ENCODE measurements at regions of chr17 and their contacts with region 1.

Region 1: DNA sequence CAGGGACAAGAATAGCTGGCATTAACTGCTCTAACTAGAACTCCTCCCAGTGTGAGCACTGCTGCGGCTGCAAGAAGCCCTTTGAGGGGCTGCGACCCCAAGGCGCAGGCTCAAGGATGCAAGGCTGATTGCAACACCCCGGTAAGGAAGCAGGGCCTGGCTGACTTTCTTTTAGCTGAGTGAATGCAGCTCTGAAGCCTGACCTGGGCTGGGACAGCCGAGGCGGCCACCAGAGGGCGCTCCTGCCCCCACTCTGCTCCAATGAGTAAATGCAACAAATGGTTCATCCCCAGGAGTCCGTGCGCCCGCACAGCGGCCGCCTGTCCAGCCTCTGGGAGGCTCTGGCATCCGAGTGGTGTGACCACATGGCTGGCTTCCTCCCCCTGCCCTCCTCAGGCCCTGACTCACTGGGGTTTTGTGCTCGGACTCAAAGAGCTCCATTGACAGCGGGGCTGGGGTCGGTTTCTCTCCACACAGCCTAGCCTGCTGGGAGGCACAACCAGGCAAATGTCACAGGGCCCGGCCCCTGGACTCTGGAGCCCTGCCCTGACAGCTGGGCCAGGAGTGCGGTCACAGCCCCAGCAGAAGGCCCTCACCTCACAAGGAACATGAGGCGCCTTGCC is at the start of gene SMIM5:
- DNase-seq: peak; percentile 75 to 97
- H3K4me3 ChIP-seq: peak within 1 kb of the TSS in 1 of 4 experiments; percentile 16; a peak in 3 of 8 replicates
- H3K27ac ChIP-seq: no peak within 1 kb of the TSS
- H3K4me1 ChIP-seq: peaks cover 0 to 16% (median 11%) of the 10 kb centered on the region in 4 experiments; a peak in 5 of 7 replicates
- H3K27me3 ChIP-seq: no peaks in the 10 kb centered on the region
- CTCF ChIP-seq: peak; percentile 93 to 95 (median 94)
- EP300 ChIP-seq: no peak
- POLR2A ChIP-seq: no peak
- RAD21 ChIP-seq: peak; percentile 58 to 70
- total RNA-seq, gene SMIM5: not detected in 2 replicates

Region 2: GRCh38 chr17:75476271-75476671 is 156.7 kb before region 1 on chr17:
- CTCF ChIA-PET with region 1: no interaction called
- POLR2A ChIA-PET with region 1: no interaction called
- DNase-seq: no peak
- H3K4me3 ChIP-seq: no peak overlapping the region
- H3K27ac ChIP-seq: no peak overlapping the region
- H3K4me1 ChIP-seq: peaks cover 0 to 7% (median under 1%) of the 10 kb centered on the region in 4 experiments; a peak in 4 of 7 replicates
- H3K27me3 ChIP-seq: no peaks in the 10 kb centered on the region
- CTCF ChIP-seq: no peak
- EP300 ChIP-seq: no peak
- POLR2A ChIP-seq: no peak
- RAD21 ChIP-seq: no peak

Region 3: GRCh38 chr17:75559958-75560533 is 72.9 kb before region 1 on chr17:
- CTCF ChIA-PET with region 1: no interaction called
- POLR2A ChIA-PET with region 1: no interaction called
- DNase-seq: no peak
- H3K4me3 ChIP-seq: no peak overlapping the region
- H3K27ac ChIP-seq: no peak overlapping the region
- H3K4me1 ChIP-seq: peaks cover 0 to 17% (median 5%) of the 10 kb centered on the region in 4 experiments; a peak in 4 of 7 replicates
- H3K27me3 ChIP-seq: no peaks in the 10 kb centered on the region
- CTCF ChIP-seq: no peak
- EP300 ChIP-seq: no peak
- POLR2A ChIP-seq: no peak
- RAD21 ChIP-seq: no peak

Region 4: DNA sequence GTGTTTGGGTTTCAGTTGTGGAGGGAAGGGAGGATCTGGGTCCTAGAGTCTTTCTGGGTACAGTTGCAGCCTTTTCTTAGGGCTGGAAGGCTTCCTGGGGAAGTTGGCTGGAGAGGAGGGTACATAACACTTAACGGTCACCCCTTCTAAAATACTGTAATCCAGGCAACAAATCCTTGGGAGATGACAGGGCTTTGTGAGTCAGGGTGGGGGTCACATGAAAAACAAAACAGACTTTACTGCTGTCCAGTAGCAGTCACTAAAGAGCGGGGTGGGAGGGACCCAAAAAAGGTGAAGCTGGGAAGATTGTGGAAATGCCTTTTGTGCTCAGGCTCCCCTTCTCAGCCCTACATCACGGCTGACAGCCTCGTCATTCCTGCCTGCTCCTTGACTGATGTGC is 40.5 kb after region 1 on chr17:
- CTCF ChIA-PET with region 1: interaction called, 2,200 read pairs
- POLR2A ChIA-PET with region 1: interaction called, 3 read pairs
- DNase-seq: no peak
- H3K4me3 ChIP-seq: no peak overlapping the region
- H3K27ac ChIP-seq: no peak overlapping the region
- H3K4me1 ChIP-seq: no peaks in the 10 kb centered on the region
- H3K27me3 ChIP-seq: no peaks in the 10 kb centered on the region
- CTCF ChIP-seq: no peak
- EP300 ChIP-seq: no peak
- POLR2A ChIP-seq: peak in 1 of 2 experiments; percentile 31; a peak in 1 of 3 replicates
- RAD21 ChIP-seq: no peak

Region 5: DNA sequence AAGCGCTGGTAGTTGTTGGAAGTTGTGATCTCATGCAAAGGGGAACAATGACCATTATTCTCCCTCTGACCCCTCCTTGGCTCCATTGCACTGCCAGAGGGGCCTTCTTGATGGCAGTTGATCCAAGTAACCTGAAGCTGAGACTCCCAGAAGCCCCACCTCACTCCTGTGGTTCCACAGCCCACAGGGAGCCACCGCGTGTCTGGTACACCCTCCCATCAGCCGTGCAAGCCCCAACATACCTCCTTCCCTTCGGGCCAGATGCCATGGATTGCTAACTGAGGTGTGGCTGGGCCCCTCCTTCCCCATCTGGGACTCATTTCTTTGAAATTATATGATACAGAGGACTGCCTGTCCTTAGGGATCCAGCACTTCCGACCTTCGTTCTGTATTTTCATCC is 52.0 kb after region 1 on chr17:
- CTCF ChIA-PET with region 1: interaction called, 15 read pairs
- POLR2A ChIA-PET with region 1: no interaction called
- DNase-seq: no peak
- H3K4me3 ChIP-seq: no peak overlapping the region
- H3K27ac ChIP-seq: no peak overlapping the region
- H3K4me1 ChIP-seq: no peaks in the 10 kb centered on the region
- H3K27me3 ChIP-seq: no peaks in the 10 kb centered on the region
- CTCF ChIP-seq: no peak
- EP300 ChIP-seq: no peak
- POLR2A ChIP-seq: no peak
- RAD21 ChIP-seq: no peak

Region 6: DNA sequence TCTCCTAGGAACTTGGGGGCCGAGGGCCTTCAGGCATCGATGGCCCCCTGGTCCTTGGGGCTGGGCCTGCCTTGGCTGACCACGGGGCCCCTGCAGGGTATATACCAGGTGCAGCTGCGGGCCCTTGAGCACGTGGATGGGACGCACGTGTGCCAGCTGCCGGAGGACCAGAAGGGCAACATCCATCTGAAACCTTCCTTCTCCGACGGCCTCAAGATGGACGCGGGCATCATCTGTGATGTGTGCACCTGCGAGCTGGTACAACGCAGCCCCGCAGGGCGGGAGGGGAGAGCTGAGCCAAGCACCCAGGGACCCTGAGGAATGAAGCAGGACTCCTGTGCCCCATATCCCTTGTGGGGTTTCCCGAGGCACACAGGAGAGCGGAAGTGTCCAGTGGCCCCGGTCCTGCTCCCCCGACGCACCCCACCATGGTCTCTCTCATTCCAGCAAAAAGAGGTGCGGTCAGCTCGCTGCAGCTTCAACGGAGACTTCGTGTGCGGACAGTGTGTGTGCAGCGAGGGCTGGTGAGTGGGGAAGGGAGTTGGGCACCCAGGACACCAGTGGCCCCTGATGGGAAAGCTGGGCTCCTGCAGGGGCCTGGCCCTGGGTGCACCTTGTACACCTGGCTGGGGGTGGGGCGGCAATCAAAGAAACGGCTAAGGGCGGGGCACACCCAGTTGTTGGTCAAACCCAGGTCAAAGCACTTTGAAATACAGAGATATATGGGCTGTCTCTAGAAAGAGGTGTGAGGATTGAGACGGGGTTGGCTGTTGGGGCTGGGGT is 98.9 kb after region 1 on chr17:
- CTCF ChIA-PET with region 1: interaction called, 15 read pairs
- POLR2A ChIA-PET with region 1: interaction called, 3 read pairs
- DNase-seq: no peak
- H3K4me3 ChIP-seq: no peak overlapping the region
- H3K27ac ChIP-seq: no peak overlapping the region
- H3K4me1 ChIP-seq: no peaks in the 10 kb centered on the region; a peak in 2 of 7 replicates
- H3K27me3 ChIP-seq: no peaks in the 10 kb centered on the region
- CTCF ChIP-seq: no peak
- EP300 ChIP-seq: no peak
- POLR2A ChIP-seq: no peak
- RAD21 ChIP-seq: no peak

Region 7: DNA sequence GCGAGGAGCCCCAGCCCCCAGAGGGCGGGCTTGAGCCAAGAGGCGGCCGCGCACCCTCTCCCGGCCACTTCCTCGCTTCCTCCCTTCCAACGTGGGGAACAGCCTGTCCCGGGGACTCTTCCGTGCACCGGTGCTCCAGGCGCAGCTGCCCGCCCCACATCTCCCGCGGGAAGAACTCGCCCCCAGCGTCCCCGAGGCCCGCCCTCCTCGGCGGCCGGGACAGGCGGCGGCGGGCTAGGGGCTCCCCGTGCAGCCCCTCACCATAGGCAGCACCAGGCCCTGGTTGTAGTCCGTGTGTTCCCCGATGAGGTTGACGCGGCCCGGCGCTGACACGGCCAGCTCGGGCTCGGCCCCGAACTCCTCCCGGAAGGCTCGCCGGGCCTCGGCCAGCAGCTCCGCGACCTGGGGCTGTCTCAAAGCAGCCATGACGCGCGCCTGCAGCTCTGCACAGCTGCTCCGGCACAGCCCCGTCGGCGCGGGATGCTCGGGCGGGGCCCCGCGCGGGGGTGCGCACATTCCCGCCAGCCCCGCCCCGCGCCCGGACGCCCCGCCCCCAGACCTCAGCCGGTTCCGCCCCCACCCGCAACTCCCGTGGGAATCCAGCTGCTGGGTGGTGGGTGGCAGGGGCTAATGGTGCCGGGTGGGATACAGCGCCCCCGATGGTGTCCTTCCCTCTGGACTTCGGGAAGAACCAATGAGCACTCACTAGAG is 131.9 kb after region 1 on chr17 and contains the start of gene GALK1:
- CTCF ChIA-PET with region 1: interaction called, 11 read pairs
- POLR2A ChIA-PET with region 1: no interaction called
- DNase-seq: peak in 1 of 2 experiments; percentile 82
- H3K4me3 ChIP-seq: peak within 1 kb of the TSS; percentile 50 to 88 (median 62)
- H3K27ac ChIP-seq: no peak within 1 kb of the TSS
- H3K4me1 ChIP-seq: peaks cover 0 to 8% (median 6%) of the 10 kb centered on the region in 4 experiments; a peak in 5 of 7 replicates
- H3K27me3 ChIP-seq: peaks cover 0 to 2% (median 0%) of the 10 kb centered on the region in 4 experiments; a peak in 1 of 7 replicates
- CTCF ChIP-seq: peak; percentile 67 to 74 (median 67)
- EP300 ChIP-seq: no peak
- POLR2A ChIP-seq: no peak
- RAD21 ChIP-seq: peak; percentile 31 to 45
- total RNA-seq, gene GALK1: 31.0 and 34.1 TPM in 2 replicates